GM10248 (cell line): ENCODE measurements at regions of chr10 and their contacts with region 1.

Region 1: GRCh38 chr10:75226656-75227055 is 9.1 kb downstream of the COMTD1 start:
- DNase-seq: no peak
- CTCF ChIP-seq: no peak

Region 2: DNA sequence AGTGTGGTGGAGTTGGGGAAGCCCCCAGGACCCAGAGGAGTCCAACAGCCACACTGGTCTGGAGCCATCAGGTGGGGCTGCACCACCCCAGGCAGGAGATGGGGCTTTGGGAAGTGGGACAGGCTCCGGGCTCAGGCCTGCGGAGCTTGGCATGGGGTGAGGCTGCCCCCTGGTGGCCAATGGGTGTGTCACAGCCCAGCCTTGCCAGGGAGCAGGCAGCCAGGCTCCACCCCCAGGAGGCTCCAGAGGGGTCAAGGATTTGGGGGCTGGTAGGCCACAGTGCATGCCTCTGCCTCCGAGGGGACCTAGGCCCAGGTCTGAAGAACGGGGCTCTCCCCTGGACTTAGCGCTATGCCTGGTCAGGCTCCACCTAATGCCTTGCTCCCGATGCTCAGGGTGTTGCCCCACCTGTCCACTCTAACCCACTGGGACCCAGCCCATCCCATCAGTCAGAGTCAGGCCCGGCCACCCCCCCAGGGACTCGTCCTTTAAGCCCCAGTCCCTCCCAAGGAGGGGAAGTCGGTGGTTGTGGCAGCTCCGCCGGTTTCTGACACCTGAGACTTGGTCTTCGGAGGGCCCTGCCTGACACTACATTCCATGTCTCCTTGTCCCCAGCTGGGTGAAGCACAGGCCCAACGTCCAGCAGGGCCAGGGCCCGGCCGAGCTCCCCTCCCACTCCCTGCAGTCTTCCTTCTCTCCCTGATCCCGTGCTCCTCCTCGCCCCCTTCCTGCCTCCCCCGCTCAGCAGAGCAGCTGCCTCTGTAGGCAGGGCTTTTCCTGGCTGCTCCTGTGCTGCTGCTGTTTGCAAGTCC is 126.5 kb before region 1 on chr10:
- CTCF ChIA-PET with region 1: no interaction called
- POLR2A ChIA-PET with region 1: no interaction called
- DNase-seq: peak; percentile 90
- CTCF ChIP-seq: peak; percentile 99

Region 3: DNA sequence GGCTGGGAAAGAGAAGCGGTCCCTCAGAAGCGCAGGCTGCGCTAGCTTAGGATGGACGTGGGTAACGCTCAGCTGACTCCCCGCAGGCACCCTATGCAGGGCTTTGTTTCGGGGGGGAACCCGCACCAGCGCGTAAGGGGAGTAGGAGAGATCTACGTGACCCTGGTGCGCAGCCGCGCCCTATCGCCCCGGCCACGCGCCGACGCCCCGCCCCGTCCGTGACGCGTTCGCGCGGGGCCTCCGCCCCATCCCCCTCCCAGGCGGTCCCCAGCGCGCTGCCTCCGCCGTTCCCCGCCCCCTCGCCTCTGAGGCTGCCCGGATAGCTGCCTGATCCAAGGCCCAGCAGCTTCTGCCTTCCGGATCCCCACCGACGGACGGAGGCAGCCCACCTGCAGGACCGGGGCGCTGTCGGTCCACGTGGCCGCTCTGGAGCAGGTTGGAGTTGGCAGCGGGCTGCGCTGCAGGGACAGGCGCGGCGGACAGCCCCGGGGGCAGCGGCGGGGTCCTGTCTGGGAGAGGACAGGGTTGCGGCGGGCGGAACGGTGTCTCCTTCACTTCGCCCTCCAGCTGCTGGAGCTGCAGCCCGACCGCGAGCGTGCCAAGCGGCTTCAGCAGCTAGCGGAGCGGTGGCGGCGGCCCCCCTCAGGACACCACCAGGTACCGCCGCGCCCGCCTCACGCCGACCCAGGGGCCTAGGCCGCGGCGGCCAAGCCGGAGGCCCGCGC is 16.2 kb before region 1 on chr10 and contains the start of gene VDAC2:
- CTCF ChIA-PET with region 1: interaction called, 19 read pairs
- POLR2A ChIA-PET with region 1: interaction called, 8 read pairs
- DNase-seq: peak; percentile 97
- CTCF ChIP-seq: no peak

Region 4: GRCh38 chr10:75246486-75246885 is 19.8 kb after region 1 on chr10:
- CTCF ChIA-PET with region 1: no interaction called
- POLR2A ChIA-PET with region 1: no interaction called
- DNase-seq: no peak
- CTCF ChIP-seq: no peak

Region 5: DNA sequence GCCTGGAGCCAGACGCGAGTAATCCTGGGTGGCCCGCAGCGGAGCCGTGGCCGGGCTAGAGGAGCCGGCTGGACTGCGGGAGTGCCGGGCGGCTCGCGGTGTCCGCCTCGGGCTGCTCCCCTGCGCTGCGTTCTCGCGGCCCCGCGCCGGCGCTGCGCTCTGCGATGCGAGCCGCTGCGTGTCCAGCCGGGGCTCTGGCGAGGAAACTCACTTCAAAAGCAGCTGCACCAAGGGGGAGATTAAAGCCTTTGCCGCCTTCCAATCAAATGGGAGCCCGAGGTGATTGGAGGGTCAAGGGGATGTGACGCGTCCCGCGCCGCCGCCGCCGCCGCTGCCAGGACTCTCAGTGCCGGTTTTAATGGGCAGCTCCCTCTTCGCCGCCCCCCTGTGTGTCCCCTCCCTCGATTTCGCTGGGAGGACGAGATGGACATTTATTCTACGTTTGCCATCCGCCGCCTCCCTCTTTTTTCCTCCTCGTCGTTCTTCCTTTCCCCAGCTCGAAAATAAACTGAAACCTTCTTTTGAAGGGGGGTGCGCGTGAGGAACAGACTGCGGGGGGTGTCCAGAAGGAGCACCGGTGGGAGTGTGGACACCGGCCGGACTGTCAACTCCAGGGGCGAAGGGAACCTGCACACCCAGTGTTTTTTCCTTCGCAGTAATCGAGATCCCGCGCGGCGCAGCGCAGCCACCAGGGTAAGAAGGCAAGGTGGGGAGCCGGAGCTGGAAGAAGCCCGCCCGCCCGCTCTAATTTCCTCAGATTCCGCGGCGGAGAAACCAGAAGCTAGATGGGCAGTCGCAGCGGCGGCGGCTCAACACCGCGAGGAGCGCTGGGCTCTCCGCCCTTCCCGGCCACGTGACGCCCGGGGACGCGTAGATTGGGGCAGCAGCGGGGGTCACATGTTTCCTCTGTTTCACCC is 175.2 kb after region 1 on chr10 and contains the start of gene ZNF503:
- CTCF ChIA-PET with region 1: no interaction called
- POLR2A ChIA-PET with region 1: no interaction called
- DNase-seq: peak; percentile 68
- CTCF ChIP-seq: no peak

Region 6: GRCh38 chr10:75512203-75512933 is 285.7 kb after region 1 on chr10:
- CTCF ChIA-PET with region 1: no interaction called
- POLR2A ChIA-PET with region 1: no interaction called
- DNase-seq: no peak
- CTCF ChIP-seq: no peak